ENCODE measurements at regions of chr16 and their contacts with region 1.

Region 1: GRCh38 chr16:30526823-30527635 is 663 bp upstream of the ZNF768 start:
- DNase-seq: peak; percentile 99
- ATAC-seq: peak; percentile 93 to 95

Region 2: GRCh38 chr16:30445408-30446202 is 81.4 kb before region 1 on chr16 and contains the start of gene SEPHS2:
- intact Hi-C with region 1: loop called in 1 of 2 experiments (anchors 5 kb)
- DNase-seq: peak; percentile 98
- ATAC-seq: peak; percentile 97 to 98
- total RNA-seq, gene SEPHS2: 32.8 to 44.7 TPM

Region 3: DNA sequence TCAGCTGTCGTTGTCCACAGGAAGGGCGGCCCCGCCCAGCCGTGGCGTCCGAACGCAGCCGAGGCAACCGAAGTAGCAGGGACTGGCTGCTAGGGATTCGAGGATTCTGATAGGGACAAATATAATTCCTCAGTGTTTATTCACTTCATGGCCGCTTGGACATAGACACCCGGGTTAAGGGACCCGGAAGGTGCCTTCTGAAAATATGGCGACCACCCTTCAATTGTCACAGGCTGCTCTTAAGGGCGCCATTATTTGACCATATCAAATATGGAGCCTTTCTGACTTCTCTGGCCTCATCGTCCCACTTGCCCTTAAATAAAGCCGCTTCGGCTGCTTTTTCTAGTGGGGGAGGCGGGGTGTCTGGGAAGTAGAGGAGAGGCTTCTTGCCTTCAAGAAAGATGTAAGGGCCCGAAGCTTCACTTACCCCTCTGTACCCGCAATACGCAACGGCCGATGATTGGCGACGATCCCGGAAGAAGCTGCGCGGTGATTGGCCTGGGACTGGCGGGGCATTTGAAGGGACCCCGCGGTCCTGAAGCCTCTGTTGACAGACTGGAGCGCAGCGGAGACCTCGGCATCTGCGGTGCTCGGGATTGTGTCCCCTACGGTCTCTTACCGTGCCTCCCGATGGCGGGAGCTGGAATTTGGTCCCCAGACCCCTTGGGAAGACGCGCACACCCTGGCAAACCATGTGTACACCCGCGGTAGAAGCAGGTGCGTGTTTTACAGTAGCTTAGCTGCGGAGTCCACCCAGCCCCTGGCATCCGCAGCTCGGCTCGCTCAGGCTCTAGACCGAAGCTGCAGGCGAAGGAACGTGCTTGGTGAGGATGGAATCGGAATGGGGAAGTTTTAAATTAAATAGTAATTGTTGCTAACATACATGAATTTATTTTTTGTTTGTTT is 44.9 kb after region 1 on chr16 and contains the start of gene ZNF688:
- intact Hi-C with region 1: loop called in 1 of 2 experiments (anchors 5 kb)
- DNase-seq: peak; percentile 96
- ATAC-seq: peak; percentile 90 to 93
- total RNA-seq, gene ZNF688: 7.9 to 12.5 TPM

Region 4: GRCh38 chr16:31052124-31052523 is 525.1 kb after region 1 on chr16:
- intact Hi-C with region 1: no loop called
- DNase-seq: no peak
- ATAC-seq: peak; percentile 65 to 97